Tibial artery (tissue), 4 donors: ENCODE measurements at regions of chr10 and their contacts with region 1.

Region 1: DNA sequence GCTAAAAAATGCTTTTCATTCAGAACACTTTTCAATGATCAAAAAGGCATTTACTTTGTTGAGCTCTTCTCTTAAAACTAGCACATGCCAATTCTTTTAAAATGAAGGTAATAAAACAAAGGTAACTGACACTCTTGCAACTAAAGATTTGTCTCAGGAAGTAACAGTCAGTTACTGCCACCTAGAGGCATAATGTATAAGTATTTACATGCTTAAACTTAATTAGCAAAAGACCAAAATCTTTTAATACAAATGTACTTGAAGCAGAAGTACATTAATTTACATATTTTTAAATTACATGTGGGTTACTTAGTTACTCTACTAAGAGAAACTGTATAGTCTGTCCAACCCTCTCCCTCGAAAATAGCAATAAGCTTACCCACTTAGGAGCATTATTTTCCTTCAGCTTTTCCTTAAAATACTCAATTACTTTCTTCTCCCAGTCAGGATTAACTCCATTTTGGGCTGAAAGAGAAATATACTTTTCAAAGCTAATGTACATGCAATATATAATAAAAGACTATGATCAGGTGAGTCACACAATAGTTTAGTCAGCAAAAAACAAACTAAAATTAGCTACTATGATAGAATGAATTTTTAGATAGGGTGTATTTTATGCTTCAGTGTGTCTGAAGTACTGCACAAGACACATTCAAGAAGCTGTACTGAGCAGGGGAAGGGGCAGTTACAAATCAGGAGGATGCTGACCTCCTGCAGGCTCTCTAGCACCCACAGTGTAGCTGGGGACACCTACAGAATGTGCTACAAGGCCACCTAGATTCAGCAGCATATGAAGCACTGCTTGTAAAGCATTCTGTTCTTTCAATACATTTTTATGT is 13.0 kb downstream of the MCMBP start:
- DNase-seq: no peak
- H3K4me3 ChIP-seq: no peak overlapping the region
- H3K27ac ChIP-seq: no peak overlapping the region
- H3K4me1 ChIP-seq: no peaks in the 10 kb centered on the region
- H3K27me3 ChIP-seq: no peaks in the 10 kb centered on the region
- CTCF ChIP-seq: peak; percentile 63 to 67

Region 2: GRCh38 chr10:119686439-119687191 is 173.0 kb before region 1 on chr10:
- intact Hi-C with region 1: loop called (anchors 10 kb)
- DNase-seq: peak; percentile 68 to 82
- H3K4me3 ChIP-seq: peak overlapping the region; percentile 22 to 31
- H3K27ac ChIP-seq: no peak overlapping the region
- H3K4me1 ChIP-seq: peaks cover 0 to 23% (median 16%) of the 10 kb centered on the region in 4 donors
- H3K27me3 ChIP-seq: no peaks in the 10 kb centered on the region
- CTCF ChIP-seq: peak; percentile 90